ENCODE measurements at regions of chr15 and their contacts with region 1.

Region 1: DNA sequence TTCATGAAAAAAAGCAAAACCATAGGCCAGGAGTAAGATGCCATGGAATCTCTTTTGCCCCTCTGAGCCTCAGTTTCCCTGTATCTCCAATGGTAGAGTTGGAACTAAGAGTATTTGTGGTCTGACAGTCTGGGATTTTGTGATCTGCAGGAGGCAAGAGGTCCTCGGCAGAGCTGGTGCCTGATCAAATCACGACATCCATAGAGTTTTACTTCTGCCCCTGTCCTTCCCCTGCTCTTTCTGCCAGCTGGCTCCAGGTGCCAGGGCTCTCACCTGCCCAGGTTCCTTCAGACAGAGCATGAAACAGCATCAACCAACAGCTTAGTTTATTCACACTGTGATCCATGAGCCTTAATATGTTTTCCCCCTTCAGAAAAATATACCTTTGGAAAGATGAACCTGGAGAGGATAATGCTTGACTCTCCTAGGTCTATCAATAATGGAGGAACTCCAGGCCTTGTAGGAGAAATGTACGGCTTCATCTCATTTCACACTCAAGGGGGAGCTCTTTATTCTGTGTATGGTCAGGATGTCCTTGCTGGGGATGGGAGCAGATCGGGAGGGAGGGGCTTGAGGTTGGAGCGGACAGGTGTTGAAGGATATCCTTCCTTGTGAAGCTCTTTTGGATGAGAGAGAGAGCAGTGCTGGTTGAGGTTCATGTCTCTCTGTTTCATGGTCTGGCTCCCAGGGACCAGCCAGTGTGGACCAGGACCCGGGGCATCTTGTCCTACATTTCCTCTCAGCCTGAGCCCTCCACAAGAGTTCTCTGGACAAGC is 309.9 kb downstream of the RPLP1 start:
- DNase-seq: no peak
- H3K4me3 ChIP-seq: no peak overlapping the region
- H3K4me3 Mint-ChIP-seq: no peak overlapping the region
- H3K27ac ChIP-seq: no peak overlapping the region
- H3K27ac Mint-ChIP-seq: peak overlapping the region in 4 of 8 donors; percentile 0 to 40 (median 19)
- H3K4me1 ChIP-seq: peaks cover 47% of the 10 kb centered on the region
- H3K4me1 Mint-ChIP-seq: peaks cover 50 to 62% (median 59%) of the 10 kb centered on the region in 3 donors
- H3K27me3 ChIP-seq: no peaks in the 10 kb centered on the region
- H3K27me3 Mint-ChIP-seq: peaks cover 10 to 14% of the 10 kb centered on the region in 2 donors

Region 2: GRCh38 chr15:70480196-70480856 is 717.8 kb after region 1 on chr15:
- CTCF ChIA-PET with region 1: no interaction called
- POLR2A ChIA-PET with region 1: interaction called, 16 read pairs
- DNase-seq: peak; percentile 28 to 80 (median 56)
- H3K4me3 ChIP-seq: no peak overlapping the region
- H3K4me3 Mint-ChIP-seq: peak overlapping the region; percentile 44 to 86 (median 64)
- H3K27ac ChIP-seq: no peak overlapping the region
- H3K27ac Mint-ChIP-seq: peak overlapping the region in 5 of 8 donors; percentile 32 to 83 (median 58)
- H3K4me1 ChIP-seq: peaks cover 36% of the 10 kb centered on the region
- H3K4me1 Mint-ChIP-seq: peaks cover 40 to 49% (median 41%) of the 10 kb centered on the region in 3 donors
- H3K27me3 ChIP-seq: no peaks in the 10 kb centered on the region
- H3K27me3 Mint-ChIP-seq: peaks cover 15 to 21% of the 10 kb centered on the region in 2 donors